ENCODE measurements at regions of chr16 and their contacts with region 1.

Region 1: DNA sequence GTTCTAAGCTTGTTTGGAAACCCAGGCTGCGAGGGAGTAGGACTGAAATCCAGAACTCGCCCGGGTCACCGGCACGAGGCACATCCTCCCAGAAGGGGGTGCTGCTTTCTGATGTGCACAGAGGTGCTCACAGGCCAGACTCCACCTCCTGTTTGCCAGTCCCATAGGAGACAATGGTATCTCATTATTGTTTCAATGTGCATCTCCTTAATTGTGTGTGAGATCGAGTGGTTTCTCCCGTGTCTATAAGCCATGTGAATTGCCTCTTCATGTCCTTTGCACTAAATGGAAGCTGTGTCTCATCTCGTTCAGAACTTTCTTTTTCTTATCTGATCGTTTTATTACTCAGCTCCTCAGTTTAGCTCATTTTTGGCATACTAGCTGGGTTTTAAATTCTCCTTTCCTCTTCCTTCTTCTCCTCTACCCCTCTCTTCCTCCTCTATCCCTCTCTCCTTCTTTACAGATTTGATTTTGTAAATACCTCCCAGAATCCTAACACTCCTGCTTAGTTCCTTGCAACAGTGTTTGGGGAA is 32.1 kb upstream of the PRKCB start:
- DNase-seq: peak; percentile 57
- ATAC-seq: peak; percentile 95
- H3K4me3 ChIP-seq: no peak overlapping the region
- H3K27ac ChIP-seq: no peak overlapping the region
- H3K4me1 ChIP-seq: peaks cover 0 to 13% of the 10 kb centered on the region in 2 experiments; a peak in 2 of 4 replicates
- H3K27me3 ChIP-seq: no peaks in the 10 kb centered on the region
- CTCF ChIP-seq: peak; percentile 58 to 77 (median 67); a peak in 5 of 6 replicates
- POLR2A ChIP-seq: no peak
- RAD21 ChIP-seq: peak; percentile 58

Region 2: DNA sequence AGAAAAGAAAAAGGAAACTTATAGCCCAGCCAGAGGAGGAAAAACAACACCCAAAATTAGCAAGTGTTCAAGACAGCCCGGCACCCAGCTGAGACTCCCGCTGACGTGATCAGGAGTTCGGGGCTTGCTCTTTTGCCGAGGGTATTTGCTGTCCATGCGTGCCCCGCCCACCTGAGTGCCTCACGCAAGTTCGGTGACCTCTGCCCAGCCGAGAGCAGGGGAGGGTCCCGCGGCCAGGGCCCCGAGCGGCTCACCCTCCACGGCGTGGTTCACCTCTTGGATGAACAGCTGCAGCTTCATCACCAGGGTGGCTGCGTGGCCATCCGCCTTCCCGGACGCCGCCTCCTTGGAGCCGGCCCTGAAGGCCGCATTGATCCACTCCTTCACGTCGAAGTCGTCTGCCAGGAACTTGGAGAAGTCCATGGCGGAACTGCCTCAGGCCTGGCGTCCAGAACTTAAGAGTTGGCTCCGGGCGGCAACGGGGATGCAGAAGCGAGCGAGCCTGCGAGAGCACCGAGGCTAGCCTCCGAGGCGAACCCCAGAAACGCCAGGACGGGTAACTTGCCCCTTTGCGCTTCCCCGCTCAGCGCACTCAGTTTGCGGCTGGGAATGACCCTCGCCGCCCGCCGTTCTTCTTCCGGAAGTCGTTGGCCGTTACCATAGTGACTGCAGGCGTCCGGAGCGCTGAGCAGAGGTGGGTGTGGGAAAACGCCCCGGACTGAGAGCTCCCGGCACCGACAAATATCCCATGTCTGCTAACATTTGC is 350.9 kb before region 1 on chr16 and contains the start of gene COG7:
- CTCF ChIA-PET with region 1: no interaction called
- POLR2A ChIA-PET with region 1: no interaction called
- RAD21 ChIA-PET with region 1: no interaction called
- intact Hi-C with region 1: no loop called
- DNase-seq: peak; percentile 78
- ATAC-seq: peak; percentile 87
- H3K4me3 ChIP-seq: peak within 1 kb of the TSS; percentile 74 to 84
- H3K27ac ChIP-seq: peak within 1 kb of the TSS; percentile 84
- H3K4me1 ChIP-seq: peaks cover 6 to 15% of the 10 kb centered on the region in 2 experiments
- H3K27me3 ChIP-seq: no peaks in the 10 kb centered on the region
- CTCF ChIP-seq: no peak
- POLR2A ChIP-seq: no peak
- RAD21 ChIP-seq: no peak
- total RNA-seq, gene COG7: 22.1 TPM

Region 3: DNA sequence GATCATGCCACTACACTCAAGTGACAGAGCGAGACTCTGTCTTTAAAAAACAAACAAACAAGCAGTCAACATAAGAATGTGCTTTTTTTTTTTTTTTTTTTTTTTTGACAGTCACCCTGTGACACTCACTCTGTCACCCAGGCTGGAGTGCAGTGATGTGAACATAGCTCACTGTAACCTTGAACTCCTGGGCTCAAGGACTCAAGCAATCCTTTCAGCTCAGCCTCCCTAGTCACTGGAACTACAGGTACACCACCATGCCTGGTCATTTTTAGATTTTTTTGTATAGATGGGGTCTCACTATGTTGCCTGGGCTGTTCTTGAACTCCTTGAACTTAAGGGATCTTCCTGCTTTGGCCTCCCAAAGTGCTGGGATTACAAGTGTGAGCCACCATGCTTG is 64.1 kb before region 1 on chr16:
- CTCF ChIA-PET with region 1: no interaction called
- POLR2A ChIA-PET with region 1: no interaction called
- RAD21 ChIA-PET with region 1: no interaction called
- intact Hi-C with region 1: loop called (anchors 5 kb)
- DNase-seq: no peak
- ATAC-seq: no peak
- H3K4me3 ChIP-seq: no peak overlapping the region
- H3K27ac ChIP-seq: no peak overlapping the region
- H3K4me1 ChIP-seq: no peaks in the 10 kb centered on the region
- H3K27me3 ChIP-seq: 0 out of 2 replicates have a peak, but pooled peaks cover 3% of the 10 kb centered on the region
- CTCF ChIP-seq: no peak
- POLR2A ChIP-seq: no peak
- RAD21 ChIP-seq: no peak

Region 4: GRCh38 chr16:24010440-24011089 is 206.9 kb after region 1 on chr16:
- CTCF ChIA-PET with region 1: interaction called, 33 read pairs
- POLR2A ChIA-PET with region 1: no interaction called
- RAD21 ChIA-PET with region 1: interaction called in 1 of 2 experiments, 5 read pairs
- intact Hi-C with region 1: loop called (anchors 1 kb)
- DNase-seq: peak; percentile 55
- ATAC-seq: peak; percentile 89
- H3K4me3 ChIP-seq: no peak overlapping the region
- H3K27ac ChIP-seq: no peak overlapping the region
- H3K4me1 ChIP-seq: no peaks in the 10 kb centered on the region
- H3K27me3 ChIP-seq: peaks cover 31% of the 10 kb centered on the region
- CTCF ChIP-seq: peak; percentile 59 to 86 (median 80); a peak in 5 of 6 replicates
- POLR2A ChIP-seq: no peak
- RAD21 ChIP-seq: peak; percentile 69

Region 5: DNA sequence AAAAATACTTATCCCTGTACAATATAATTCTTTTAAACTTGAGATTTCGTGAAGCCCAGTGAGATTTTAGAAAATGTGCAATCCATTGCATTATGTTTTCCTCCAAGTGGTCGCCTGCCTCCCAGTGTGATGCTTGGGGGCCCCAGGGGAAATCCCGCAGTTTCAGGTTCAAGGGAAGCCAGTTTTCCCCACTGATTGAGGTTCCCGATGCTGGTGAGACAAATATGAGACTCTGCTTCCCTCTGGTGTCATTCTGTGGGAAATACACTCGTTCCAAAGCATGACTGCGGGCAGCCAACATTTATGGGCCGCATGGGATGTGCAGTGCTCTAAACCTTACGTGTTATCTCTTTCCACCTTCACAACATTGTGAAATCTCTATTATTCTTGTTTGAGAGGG is 233.0 kb after region 1 on chr16:
- CTCF ChIA-PET with region 1: interaction called, 7 read pairs
- POLR2A ChIA-PET with region 1: no interaction called
- RAD21 ChIA-PET with region 1: interaction called in 1 of 2 experiments, 3 read pairs
- intact Hi-C with region 1: loop called (anchors 1 kb)
- DNase-seq: peak; percentile 29
- ATAC-seq: peak; percentile 86
- H3K4me3 ChIP-seq: no peak overlapping the region
- H3K27ac ChIP-seq: no peak overlapping the region
- H3K4me1 ChIP-seq: no peaks in the 10 kb centered on the region
- H3K27me3 ChIP-seq: no peaks in the 10 kb centered on the region
- CTCF ChIP-seq: peak; percentile 61 to 79 (median 65)
- POLR2A ChIP-seq: no peak
- RAD21 ChIP-seq: peak; percentile 88